ENCODE measurements at regions of chr16 and their contacts with region 1.

Region 1: GRCh38 chr16:24988593-24989338 is 26.4 kb downstream of the ARHGAP17 start:
- DNase-seq: no peak

Region 2: DNA sequence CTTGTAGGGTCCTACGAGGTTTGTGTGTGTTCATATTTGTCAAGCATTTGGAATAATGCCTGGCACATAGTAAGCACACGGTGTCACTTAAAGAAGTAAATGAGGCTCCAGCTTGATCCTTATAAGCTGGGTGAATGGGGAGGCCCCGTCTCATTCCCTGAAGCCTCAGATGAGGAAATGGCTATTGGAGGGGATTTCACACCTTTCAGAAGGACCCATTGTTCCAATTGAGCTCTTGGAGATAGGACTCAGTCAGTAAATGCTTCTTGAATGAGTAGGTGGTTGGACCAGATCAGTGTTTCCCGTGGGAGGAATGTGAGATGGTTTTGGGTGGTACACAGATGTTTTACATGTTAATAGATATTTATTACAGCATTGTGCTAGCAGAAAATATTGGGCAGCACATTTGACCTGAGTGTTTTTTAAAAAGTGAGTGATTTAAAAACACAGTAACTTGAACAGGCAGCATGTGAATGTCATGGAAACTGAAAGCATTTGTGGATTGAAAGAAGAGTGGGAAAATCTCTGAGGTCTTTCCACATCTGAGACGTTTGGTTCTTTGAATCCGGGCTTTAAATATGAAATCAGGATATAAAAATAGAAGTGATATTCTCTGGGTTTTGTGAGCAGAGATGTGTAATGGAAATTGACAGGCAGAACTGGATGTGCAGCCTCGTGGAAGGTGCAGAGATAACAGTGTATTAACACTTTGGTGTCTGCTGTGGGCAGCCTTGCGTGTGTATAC is 62.8 kb after region 1 on chr16:
- intact Hi-C with region 1: loop called (anchors 5 kb)
- DNase-seq: no peak